HEK293 (cell line): ENCODE measurements at regions of chr12 and their contacts with region 1.

Region 1: GRCh38 chr12:52307836-52308805 is 13.1 kb downstream of the KRT83 start:
- H3K4me3 ChIP-seq: peak overlapping the region; percentile 7
- H3K27ac ChIP-seq: no peak overlapping the region
- H3K4me1 ChIP-seq: no peaks in the 10 kb centered on the region
- CTCF ChIP-seq: peak; percentile 74

Region 2: GRCh38 chr12:52285172-52285745 is 22.9 kb before region 1 on chr12:
- CTCF ChIA-PET with region 1: interaction called, 21 read pairs
- POLR2A ChIA-PET with region 1: no interaction called
- H3K4me3 ChIP-seq: no peak overlapping the region
- H3K27ac ChIP-seq: no peak overlapping the region
- H3K4me1 ChIP-seq: no peaks in the 10 kb centered on the region
- CTCF ChIP-seq: no peak

Region 3: DNA sequence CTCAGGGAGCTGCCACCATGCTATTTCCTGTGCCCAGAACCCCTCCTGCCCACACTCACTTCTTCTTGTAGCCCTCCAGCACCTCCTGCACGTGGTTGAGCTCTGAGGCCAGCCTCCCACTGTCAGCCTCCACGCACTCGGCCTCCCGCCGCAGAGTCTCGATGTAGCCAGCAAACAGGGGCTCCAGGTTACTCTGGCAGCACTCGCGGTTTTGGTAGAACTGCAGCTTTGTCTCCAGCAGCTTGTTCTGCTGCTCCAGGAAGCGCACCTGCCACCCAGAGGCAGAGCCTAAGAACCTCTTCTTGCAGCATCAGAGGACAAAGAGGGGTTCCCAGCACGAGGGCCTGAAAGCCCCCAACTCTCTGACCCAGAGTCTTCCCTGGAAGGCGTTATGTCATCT is 11.0 kb after region 1 on chr12:
- CTCF ChIA-PET with region 1: interaction called, 18 read pairs
- POLR2A ChIA-PET with region 1: no interaction called
- H3K4me3 ChIP-seq: no peak overlapping the region
- H3K27ac ChIP-seq: no peak overlapping the region
- H3K4me1 ChIP-seq: no peaks in the 10 kb centered on the region
- CTCF ChIP-seq: no peak

Region 4: GRCh38 chr12:52327052-52327829 is 19.1 kb after region 1 on chr12:
- CTCF ChIA-PET with region 1: interaction called, 41 read pairs
- POLR2A ChIA-PET with region 1: no interaction called
- H3K4me3 ChIP-seq: no peak overlapping the region
- H3K27ac ChIP-seq: no peak overlapping the region
- H3K4me1 ChIP-seq: no peaks in the 10 kb centered on the region
- CTCF ChIP-seq: peak; percentile 97